Activated CD4-positive, alpha-beta T cell treated with anti-CD3 and anti-CD28 coated beads, Interleukin-2, amount 10 ng/mL, durations not matched to agents 7 days and 5 days (primary cell): ENCODE measurements at regions of chr14 and their contacts with region 1.

Region 1: DNA sequence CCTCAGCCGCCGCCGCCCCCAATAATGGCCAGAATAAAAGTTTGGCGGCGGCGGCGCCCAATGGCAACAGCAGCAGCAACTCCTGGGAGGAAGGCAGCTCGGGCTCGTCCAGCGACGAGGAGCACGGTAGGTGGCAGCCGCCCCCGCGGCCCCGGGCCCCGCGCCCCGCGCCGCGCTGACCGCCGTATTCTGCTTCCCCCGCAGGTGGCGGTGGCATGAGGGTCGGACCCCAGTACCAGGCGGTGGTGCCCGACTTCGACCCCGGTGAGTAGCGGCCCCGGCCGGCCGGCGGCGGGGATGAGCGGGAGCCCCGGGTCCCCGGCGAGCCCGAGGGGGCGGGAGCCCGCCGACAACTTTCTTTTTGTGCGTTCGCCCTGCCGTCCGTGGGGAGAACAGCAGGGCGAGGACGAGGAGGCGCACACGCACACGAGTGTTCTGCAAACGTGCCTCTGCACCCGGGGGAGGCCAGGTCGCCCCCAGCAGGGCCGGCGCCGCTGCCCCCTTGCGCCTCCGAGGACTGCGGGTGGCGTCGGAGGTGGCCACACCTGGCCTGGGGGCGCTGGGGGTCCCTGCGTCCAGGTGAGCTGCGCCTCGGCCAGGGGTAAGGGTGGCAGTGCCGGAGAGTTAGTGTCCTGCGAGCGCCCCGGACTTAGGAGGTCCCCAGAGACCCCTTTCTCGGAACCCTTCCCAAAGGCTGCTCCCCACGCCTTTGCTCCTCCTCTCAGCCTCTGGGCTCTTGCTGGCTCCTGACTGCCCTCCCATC is 794 bp downstream of the RCOR1 start:
- DNase-seq: peak; percentile 67
- H3K4me3 Mint-ChIP-seq: peak overlapping the region; percentile 76
- H3K27ac Mint-ChIP-seq: peak overlapping the region; percentile 86
- H3K4me1 Mint-ChIP-seq: peaks cover 25% of the 10 kb centered on the region
- H3K27me3 Mint-ChIP-seq: peaks cover 2% of the 10 kb centered on the region

Region 2: GRCh38 chr14:102557434-102558226 is 35.6 kb before region 1 on chr14:
- CTCF ChIA-PET with region 1: interaction called, 10 read pairs
- POLR2A ChIA-PET with region 1: no interaction called
- DNase-seq: no peak
- H3K4me3 Mint-ChIP-seq: no peak overlapping the region
- H3K27ac Mint-ChIP-seq: no peak overlapping the region
- H3K4me1 Mint-ChIP-seq: peaks cover 5% of the 10 kb centered on the region
- H3K27me3 Mint-ChIP-seq: no peaks in the 10 kb centered on the region

Region 3: GRCh38 chr14:102606296-102606695 is 13.1 kb after region 1 on chr14:
- CTCF ChIA-PET with region 1: interaction called, 11 read pairs
- POLR2A ChIA-PET with region 1: no interaction called
- DNase-seq: no peak
- H3K4me3 Mint-ChIP-seq: no peak overlapping the region
- H3K27ac Mint-ChIP-seq: no peak overlapping the region
- H3K4me1 Mint-ChIP-seq: peaks cover 29% of the 10 kb centered on the region
- H3K27me3 Mint-ChIP-seq: no peaks in the 10 kb centered on the region

Region 4: DNA sequence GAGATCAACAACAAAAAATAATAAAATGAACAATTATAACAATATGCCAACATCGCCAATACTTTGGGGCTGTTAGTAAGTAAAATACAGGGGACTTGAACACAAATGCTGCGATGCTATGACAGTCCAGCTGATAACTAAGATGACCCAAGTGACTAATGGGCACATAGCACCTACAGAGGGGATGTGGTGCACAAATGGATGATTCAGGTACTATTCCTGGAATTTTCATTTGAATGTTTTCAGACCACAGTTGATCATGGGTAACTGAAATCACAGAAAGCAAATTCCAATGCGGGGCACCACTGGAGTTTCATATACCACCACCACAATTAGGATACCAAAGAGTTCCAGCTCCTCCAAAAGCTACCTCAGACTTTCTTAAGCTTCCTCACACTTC is 82.2 kb after region 1 on chr14:
- CTCF ChIA-PET with region 1: no interaction called
- POLR2A ChIA-PET with region 1: no interaction called
- DNase-seq: no peak
- H3K4me3 Mint-ChIP-seq: no peak overlapping the region
- H3K27ac Mint-ChIP-seq: no peak overlapping the region
- H3K4me1 Mint-ChIP-seq: peaks cover 3% of the 10 kb centered on the region
- H3K27me3 Mint-ChIP-seq: no peaks in the 10 kb centered on the region